ENCODE measurements at regions of chr5 and their contacts with region 1.

Region 1: GRCh38 chr5:157198277-157198986 is 17.8 kb downstream of the ITK start:
- DNase-seq: no peak
- H3K4me3 Mint-ChIP-seq: peak overlapping the region; percentile 68
- H3K27ac Mint-ChIP-seq: peak overlapping the region; percentile 94
- H3K4me1 Mint-ChIP-seq: peaks cover 94% of the 10 kb centered on the region
- H3K27me3 Mint-ChIP-seq: no peaks in the 10 kb centered on the region

Region 2: DNA sequence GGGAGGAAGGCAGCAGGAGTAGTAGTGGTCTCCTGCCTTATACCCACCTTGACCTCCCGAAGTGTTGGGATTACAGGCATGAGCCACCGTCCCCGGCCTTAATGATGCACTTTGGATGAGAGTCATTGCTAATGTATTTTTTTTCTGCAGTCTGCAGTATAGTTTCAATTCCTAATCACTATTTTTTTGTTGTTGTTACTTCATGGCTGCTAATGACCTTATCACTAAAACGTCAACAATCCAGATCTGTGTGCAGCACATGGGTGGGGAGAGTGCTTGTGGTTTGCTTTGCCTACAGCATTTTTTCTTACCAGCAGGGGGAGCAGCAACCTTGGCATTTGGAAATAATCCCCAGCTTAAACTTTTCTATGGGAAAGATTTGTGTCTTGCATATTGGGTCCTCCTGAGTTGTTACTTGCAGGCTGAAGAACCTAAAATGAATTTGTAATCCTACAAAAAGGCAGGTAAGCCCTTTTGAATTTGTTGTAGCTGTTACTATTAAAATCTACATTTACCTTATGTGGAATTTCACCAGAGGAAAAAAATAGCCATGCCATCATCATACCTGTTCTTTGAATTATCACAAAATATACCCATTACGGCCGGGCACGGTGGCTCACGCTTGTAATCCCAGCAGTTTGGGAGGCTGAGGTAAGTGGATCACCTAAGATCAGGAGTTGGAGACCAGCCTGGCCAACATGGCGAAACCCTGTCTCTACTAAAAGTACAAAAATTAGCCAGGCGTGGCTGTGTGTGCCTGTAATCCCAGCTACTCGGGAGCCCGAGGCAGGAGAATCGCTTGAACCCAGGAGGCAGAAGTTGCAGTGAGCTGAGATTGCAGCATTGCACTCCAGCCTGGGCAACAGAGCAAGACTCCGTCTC is 49.5 kb before region 1 on chr5:
- intact Hi-C with region 1: loop called (anchors 1 kb)
- DNase-seq: peak; percentile 74
- H3K4me3 Mint-ChIP-seq: no peak overlapping the region
- H3K27ac Mint-ChIP-seq: peak overlapping the region; percentile 67
- H3K4me1 Mint-ChIP-seq: peaks cover 43% of the 10 kb centered on the region
- H3K27me3 Mint-ChIP-seq: no peaks in the 10 kb centered on the region

Region 3: DNA sequence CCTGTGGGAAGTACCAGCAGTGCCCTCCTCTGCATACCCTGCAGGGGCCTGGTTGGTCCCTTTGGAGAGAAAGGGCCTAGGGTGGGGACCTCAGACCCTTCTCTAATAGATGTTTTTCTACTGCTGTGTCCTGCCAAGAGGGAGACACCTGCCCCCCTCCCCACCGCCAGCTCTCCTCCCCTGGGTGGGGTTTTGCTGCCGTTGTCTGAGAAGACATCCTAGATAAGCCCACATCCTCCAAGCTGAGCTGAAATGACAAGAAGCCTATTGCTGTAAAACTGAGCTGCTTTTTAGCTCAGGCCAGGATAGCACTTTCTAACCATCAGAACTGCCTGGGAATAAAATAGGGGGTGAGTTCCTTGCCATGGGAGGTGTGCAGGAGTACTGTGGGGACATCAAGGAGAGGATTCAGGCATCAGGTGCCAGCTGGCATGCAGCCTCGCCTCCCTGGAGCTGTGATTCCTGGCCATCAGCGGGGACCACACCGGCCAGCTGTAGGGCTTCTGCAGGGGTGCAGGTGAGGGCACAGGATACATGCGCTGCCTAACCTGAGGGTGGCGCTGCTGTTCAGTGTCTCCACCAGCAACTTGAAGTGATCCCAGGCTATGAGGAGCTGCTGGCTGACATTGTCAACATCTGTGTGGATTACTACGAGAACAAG is 105.4 kb after region 1 on chr5:
- intact Hi-C with region 1: no loop called
- DNase-seq: peak; percentile 34
- H3K4me3 Mint-ChIP-seq: peak overlapping the region; percentile 56
- H3K27ac Mint-ChIP-seq: peak overlapping the region; percentile 75
- H3K4me1 Mint-ChIP-seq: peaks cover 62% of the 10 kb centered on the region
- H3K27me3 Mint-ChIP-seq: no peaks in the 10 kb centered on the region

Region 4: DNA sequence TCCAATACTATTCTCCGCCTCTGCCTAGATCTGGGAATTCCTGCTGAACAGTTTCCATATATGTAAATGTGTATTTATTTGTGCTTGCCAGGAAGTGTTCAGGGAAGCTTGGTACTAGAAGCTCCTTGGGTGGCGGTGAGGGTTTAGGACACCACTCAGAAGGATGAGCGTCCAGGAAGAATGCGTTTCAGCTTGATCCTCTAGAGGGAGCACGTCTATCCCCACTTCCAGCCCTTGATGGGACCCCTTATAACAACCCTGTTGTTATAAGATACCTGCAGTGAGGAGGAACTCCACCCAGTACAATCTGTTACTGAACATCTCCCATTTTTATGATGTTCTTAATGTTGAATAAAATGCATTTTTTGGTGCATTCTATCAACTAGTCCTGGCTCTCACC is 156.4 kb after region 1 on chr5:
- intact Hi-C with region 1: no loop called
- DNase-seq: no peak
- H3K4me3 Mint-ChIP-seq: no peak overlapping the region
- H3K27ac Mint-ChIP-seq: peak overlapping the region; percentile 42
- H3K4me1 Mint-ChIP-seq: peaks cover 55% of the 10 kb centered on the region
- H3K27me3 Mint-ChIP-seq: no peaks in the 10 kb centered on the region

Measured in activated T-helper 1 cell treated with anti-CD3 and anti-CD28 coated beads, Interleukin-12 subunit alpha, Interleukin-12 subunit beta, Interleukin-2, Interleukin-4 antibody, amounts not matched to agents 30 ng/mL and 10 ng/mL and 1 ng/mL, durations not matched to agents 14 hours and 24 hours and 36 hours (primary cell).